Endothelial cell of umbilical vein (primary cell): ENCODE measurements at regions of chr19 and their contacts with region 1.

Region 1: DNA sequence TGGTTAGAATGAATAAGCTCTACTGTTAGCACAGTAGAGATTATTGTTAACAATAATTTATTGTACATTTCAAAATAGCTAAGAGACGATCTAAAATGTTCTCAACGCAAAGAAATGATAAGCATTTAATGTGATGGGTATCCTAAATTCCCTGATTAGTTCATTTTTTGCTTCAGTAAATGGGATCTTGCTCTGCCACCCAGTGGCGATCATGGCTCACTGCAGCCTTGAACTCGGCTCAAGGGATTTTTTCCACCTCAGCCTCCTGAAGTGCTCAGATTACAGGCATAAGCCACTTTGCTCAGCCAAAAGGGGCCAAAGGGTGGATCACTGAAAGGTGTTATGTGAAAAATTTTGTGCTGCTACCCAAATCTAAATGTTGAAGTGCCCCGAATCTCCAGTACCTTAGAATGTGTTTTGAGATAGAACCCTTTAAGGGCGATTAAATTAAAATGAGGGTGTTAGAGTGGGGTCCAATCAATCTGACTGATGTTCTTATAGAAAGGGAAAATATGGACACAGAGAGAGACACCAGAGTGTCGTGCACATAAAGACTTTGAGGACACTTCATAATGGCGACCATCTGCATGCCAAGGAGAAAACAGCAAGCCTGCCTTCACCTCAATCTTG is 31.5 kb upstream of the ZNF766 start:
- DNase-seq: peak; percentile 69
- H3K4me3 ChIP-seq: no peak overlapping the region
- H3K27ac ChIP-seq: no peak overlapping the region
- H3K4me1 ChIP-seq: no peaks in the 10 kb centered on the region
- H3K27me3 ChIP-seq: no peaks in the 10 kb centered on the region
- CTCF ChIP-seq: peak; percentile 76 to 86
- POLR2A ChIP-seq: no peak

Region 2: DNA sequence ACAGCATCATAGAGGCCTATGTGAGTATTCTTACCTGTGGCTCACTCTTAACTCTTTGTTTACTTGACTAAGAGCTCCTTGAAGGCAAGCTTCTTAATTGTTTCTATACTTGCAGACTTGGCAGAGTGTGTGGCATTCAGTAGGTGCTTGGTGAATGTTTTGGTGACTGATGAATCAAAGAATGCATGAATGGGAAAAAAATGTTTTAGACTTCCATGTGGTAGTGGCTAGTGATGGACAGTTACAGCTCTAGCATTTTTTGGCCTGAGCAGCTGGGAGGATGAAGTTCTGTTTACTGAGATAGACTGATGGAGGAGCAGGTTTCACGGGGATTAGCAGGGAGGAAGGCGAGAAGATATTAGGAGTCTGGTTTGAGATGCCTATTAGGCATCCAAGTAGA is 527.7 kb before region 1 on chr19:
- CTCF ChIA-PET with region 1: no interaction called
- POLR2A ChIA-PET with region 1: no interaction called
- dilution Hi-C with region 1: no loop called
- intact Hi-C with region 1: loop called (anchors 2 kb)
- DNase-seq: no peak
- H3K4me3 ChIP-seq: no peak overlapping the region
- H3K27ac ChIP-seq: no peak overlapping the region
- H3K4me1 ChIP-seq: no peaks in the 10 kb centered on the region
- H3K27me3 ChIP-seq: no peaks in the 10 kb centered on the region
- CTCF ChIP-seq: no peak
- POLR2A ChIP-seq: no peak

Region 3: GRCh38 chr19:51904331-51905165 is 333.3 kb before region 1 on chr19 and contains the start of gene ZNF649:
- CTCF ChIA-PET with region 1: no interaction called
- POLR2A ChIA-PET with region 1: no interaction called
- dilution Hi-C with region 1: no loop called
- intact Hi-C with region 1: loop called (anchors 1 kb)
- DNase-seq: peak; percentile 84
- H3K4me3 ChIP-seq: peak within 1 kb of the TSS; percentile 91 to 98 (median 94)
- H3K27ac ChIP-seq: peak within 1 kb of the TSS; percentile 46
- H3K4me1 ChIP-seq: no peaks in the 10 kb centered on the region
- H3K27me3 ChIP-seq: no peaks in the 10 kb centered on the region
- CTCF ChIP-seq: no peak
- POLR2A ChIP-seq: no peak
- total RNA-seq, gene ZNF649: 8.6 and 9.0 TPM in 2 replicates

Region 4: GRCh38 chr19:52139252-52140031 is 98.4 kb before region 1 on chr19 and contains the start of gene ZNF616:
- CTCF ChIA-PET with region 1: interaction called, 13 read pairs
- POLR2A ChIA-PET with region 1: no interaction called
- dilution Hi-C with region 1: no loop called
- intact Hi-C with region 1: loop called (anchors 1 kb)
- DNase-seq: peak; percentile 95
- H3K4me3 ChIP-seq: peak within 1 kb of the TSS; percentile 55 to 88 (median 72)
- H3K27ac ChIP-seq: peak within 1 kb of the TSS; percentile 66
- H3K4me1 ChIP-seq: peaks cover 6% of the 10 kb centered on the region
- H3K27me3 ChIP-seq: no peaks in the 10 kb centered on the region
- CTCF ChIP-seq: peak; percentile 59 to 77
- POLR2A ChIP-seq: peak; percentile 78
- total RNA-seq, gene ZNF616: 8.7 and 9.1 TPM in 2 replicates